HEK293 (cell line): ENCODE measurements at regions of chr12 and their contacts with region 1.

Region 1: DNA sequence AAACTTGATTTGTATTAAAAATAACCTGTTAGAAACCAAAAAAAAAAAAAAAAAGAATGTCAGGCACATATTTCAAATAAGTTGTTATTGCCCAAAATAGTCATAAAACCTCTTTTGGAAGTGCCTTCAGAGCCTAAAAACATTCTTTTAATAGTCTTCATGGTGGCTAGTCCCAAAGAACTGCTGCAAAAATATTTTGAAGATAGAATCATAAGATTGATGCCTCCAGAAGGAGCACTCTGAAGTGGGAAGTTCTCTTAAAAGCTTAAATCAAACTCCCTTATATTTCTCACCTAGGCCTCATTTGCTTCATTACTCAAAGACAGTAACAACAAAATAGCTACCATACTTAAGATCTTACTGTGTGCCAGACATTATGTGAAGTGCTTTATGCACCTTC is 27.2 kb upstream of the NT5DC3 start:
- H3K4me3 ChIP-seq: no peak overlapping the region
- H3K27ac ChIP-seq: no peak overlapping the region
- H3K4me1 ChIP-seq: no peaks in the 10 kb centered on the region
- CTCF ChIP-seq: no peak

Region 2: DNA sequence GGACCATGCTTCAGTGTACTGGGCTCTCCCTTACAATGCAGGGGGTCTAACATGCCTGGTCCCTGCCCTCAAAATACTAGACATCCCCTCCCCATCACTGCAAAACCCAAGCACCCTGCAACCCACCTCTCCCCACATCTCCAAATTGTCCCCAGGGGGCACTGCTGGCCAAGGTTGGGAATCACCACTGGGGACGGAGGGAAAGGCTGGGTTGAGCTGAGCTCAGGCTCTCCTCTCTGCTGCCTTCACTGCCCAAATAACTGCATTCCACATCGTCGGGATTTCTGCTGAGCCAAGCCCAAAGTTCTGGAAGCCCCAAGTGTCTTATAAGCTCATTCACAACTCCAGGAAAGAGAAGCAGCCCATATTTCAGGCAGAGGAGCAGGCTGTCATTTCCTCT is 96.7 kb before region 1 on chr12:
- CTCF ChIA-PET with region 1: interaction called, 43 read pairs
- POLR2A ChIA-PET with region 1: no interaction called
- H3K4me3 ChIP-seq: no peak overlapping the region
- H3K27ac ChIP-seq: no peak overlapping the region
- H3K4me1 ChIP-seq: peaks cover 2% of the 10 kb centered on the region; the same call in 1 of the 2 replicates
- CTCF ChIP-seq: peak; percentile 71

Region 3: GRCh38 chr12:103897316-103897715 is 29.1 kb after region 1 on chr12:
- CTCF ChIA-PET with region 1: no interaction called
- POLR2A ChIA-PET with region 1: no interaction called
- H3K4me3 ChIP-seq: no peak overlapping the region
- H3K27ac ChIP-seq: no peak overlapping the region
- H3K4me1 ChIP-seq: no peaks in the 10 kb centered on the region
- CTCF ChIP-seq: no peak